Panc1 (cell line): ENCODE measurements at regions of chr3 and their contacts with region 1.

Region 1: DNA sequence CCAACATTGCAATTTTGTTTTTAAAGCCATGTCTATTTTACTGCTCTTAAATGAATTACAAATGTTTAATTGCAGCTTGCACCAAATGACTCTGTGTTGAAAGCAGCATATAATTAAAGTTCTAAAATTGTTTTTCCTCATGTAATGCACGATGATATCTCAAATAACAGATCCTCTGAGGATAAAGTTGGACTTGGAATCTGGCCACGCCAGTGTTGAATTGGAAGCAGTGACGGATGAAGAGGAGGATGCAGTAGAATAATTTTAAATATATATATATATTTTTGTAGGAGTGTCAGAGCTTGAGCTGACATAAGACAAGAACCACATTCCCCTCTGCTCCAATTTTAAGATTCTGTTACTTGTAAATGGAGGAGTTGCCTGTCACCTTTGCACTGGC is 406.6 kb upstream of the DPPA4 start:
- DNase-seq: no peak
- ATAC-seq: no peak
- H3K4me3 ChIP-seq: no peak overlapping the region
- H3K27ac ChIP-seq: no peak overlapping the region
- H3K4me1 ChIP-seq: no peaks in the 10 kb centered on the region
- H3K27me3 ChIP-seq: no peaks in the 10 kb centered on the region
- CTCF ChIP-seq: no peak

Region 2: DNA sequence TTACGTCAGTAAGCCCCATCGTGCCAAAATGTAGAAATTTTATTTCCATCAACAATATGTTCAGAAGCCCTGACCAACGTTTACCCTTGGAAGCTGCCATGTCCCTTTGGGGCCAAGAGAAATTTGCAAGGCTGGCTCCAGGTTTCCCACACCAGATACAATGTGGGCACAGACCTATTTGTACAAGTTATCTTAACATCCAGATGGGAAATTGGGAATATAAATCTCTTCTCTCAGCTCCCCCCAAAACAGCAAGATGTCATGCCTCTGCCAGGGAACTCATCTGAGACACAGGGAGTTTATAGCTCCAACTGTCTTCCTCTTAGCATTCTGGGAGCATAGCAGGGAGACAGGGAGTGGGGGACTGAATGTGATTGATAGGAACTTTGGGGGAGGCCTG is 418.3 kb before region 1 on chr3:
- CTCF ChIA-PET with region 1: no interaction called
- POLR2A ChIA-PET with region 1: interaction called, 10 read pairs
- in situ Hi-C with region 1: no loop called
- intact Hi-C with region 1: no loop called
- DNase-seq: no peak
- ATAC-seq: no peak
- H3K4me3 ChIP-seq: no peak overlapping the region
- H3K27ac ChIP-seq: no peak overlapping the region
- H3K4me1 ChIP-seq: no peaks in the 10 kb centered on the region
- H3K27me3 ChIP-seq: 0 out of 2 replicates have a peak, but pooled peaks cover 2% of the 10 kb centered on the region
- CTCF ChIP-seq: no peak